Activated naive CD4-positive, alpha-beta T cell treated with anti-CD3 and anti-CD28 coated beads for 36 hours (primary cell): ENCODE measurements at regions of chr1 and their contacts with region 1.

Region 1: DNA sequence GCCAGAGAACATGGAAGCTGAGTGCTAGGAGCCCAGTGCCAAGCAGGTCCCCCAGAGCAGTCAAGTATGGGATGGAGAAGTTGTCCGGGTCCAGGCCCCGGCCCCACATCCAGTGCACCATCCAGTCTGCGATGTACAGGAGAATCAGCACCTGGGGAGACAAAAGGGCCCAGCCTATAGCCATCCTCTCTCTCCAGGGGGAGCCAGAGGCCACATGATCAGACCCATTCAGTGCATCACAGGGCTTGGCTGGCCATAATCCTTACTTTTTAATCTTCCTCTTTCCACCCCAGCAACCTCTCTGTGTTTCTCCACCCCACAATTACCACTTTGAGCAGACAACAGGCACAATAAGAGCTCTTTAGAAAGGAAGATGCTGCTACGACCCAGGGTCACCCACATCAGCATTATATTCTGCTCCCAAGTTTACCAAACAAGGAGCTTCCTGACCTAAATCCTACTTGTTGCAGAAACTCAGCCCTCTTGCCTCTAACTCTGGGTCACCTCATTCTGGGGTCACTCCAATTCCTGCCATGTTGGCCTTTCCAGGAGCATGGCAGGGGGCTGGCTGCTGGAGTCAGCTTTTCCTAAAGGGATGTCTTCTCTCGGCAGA is 16.4 kb upstream of the RAB29 start:
- DNase-seq: peak; percentile 80
- H3K4me3 Mint-ChIP-seq: no peak overlapping the region
- H3K27ac Mint-ChIP-seq: no peak overlapping the region
- H3K4me1 Mint-ChIP-seq: no peaks in the 10 kb centered on the region
- H3K27me3 Mint-ChIP-seq: no peaks in the 10 kb centered on the region

Region 2: DNA sequence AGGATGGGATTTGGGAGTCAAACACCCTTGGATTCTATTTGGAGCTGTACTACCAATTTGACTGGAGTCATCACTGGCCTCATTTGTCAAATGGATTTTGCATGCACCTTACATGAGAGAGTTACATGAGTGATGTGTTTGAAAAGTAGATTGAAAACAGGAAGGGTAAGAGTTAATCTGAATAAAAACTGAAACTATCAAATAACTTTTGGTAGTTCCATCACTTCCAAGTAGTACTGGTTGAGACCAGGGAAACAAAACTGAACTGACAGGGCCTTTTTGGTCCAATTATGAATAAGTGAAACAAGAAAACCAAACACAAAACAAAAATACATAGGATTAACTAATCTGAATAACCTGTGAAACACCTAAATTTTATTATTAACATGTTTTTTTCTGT is 71.9 kb before region 1 on chr1:
- CTCF ChIA-PET with region 1: no interaction called
- intact Hi-C with region 1: no loop called
- DNase-seq: no peak
- H3K4me3 Mint-ChIP-seq: no peak overlapping the region
- H3K27ac Mint-ChIP-seq: peak overlapping the region; percentile 67
- H3K4me1 Mint-ChIP-seq: peaks cover 42% of the 10 kb centered on the region
- H3K27me3 Mint-ChIP-seq: no peaks in the 10 kb centered on the region

Region 3: GRCh38 chr1:205749234-205750137 is 42.2 kb before region 1 on chr1:
- CTCF ChIA-PET with region 1: no interaction called
- intact Hi-C with region 1: no loop called
- DNase-seq: peak; percentile 98
- H3K4me3 Mint-ChIP-seq: peak overlapping the region; percentile 95
- H3K27ac Mint-ChIP-seq: peak overlapping the region; percentile 100
- H3K4me1 Mint-ChIP-seq: peaks cover 37% of the 10 kb centered on the region
- H3K27me3 Mint-ChIP-seq: no peaks in the 10 kb centered on the region

Region 4: GRCh38 chr1:205805082-205805712 is 13.5 kb after region 1 on chr1:
- CTCF ChIA-PET with region 1: interaction called, 15 read pairs
- intact Hi-C with region 1: no loop called
- DNase-seq: peak; percentile 87
- H3K4me3 Mint-ChIP-seq: peak overlapping the region; percentile 58
- H3K27ac Mint-ChIP-seq: peak overlapping the region; percentile 83
- H3K4me1 Mint-ChIP-seq: peaks cover 62% of the 10 kb centered on the region
- H3K27me3 Mint-ChIP-seq: no peaks in the 10 kb centered on the region

Region 5: GRCh38 chr1:205812878-205813754 is 21.4 kb after region 1 on chr1 and contains the start of gene SLC41A1:
- CTCF ChIA-PET with region 1: interaction called, 16 read pairs
- intact Hi-C with region 1: no loop called
- DNase-seq: peak; percentile 95
- H3K4me3 Mint-ChIP-seq: peak within 1 kb of the TSS; percentile 89
- H3K27ac Mint-ChIP-seq: peak within 1 kb of the TSS; percentile 74
- H3K4me1 Mint-ChIP-seq: peaks cover 49% of the 10 kb centered on the region
- H3K27me3 Mint-ChIP-seq: no peaks in the 10 kb centered on the region
- total RNA-seq, gene SLC41A1: 32.1 to 33.9 TPM

Region 6: GRCh38 chr1:205824180-205824579 is 32.5 kb after region 1 on chr1:
- CTCF ChIA-PET with region 1: interaction called, 3 read pairs
- intact Hi-C with region 1: loop called (anchors 1 kb)
- DNase-seq: no peak
- H3K4me3 Mint-ChIP-seq: no peak overlapping the region
- H3K27ac Mint-ChIP-seq: no peak overlapping the region
- H3K4me1 Mint-ChIP-seq: peaks cover 22% of the 10 kb centered on the region
- H3K27me3 Mint-ChIP-seq: no peaks in the 10 kb centered on the region

Region 7: DNA sequence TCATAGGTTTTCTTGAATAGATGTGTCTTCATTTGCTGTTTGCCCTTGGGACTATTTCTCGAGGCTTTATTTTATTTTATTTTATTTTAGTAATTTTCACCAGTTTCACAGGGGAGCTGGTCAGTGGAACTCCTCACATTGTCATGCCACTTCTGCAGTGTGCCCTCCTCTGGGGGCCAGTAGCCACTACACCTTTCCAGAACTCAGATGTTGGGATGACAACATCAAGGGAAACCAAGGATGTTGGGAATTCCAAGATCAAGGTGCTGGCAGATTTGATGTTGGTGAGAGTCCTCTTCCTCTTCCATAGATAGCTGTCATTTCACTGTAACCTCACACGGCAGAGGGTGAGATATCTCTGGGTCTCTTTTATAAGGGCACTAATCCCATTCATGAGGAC is 116.1 kb after region 1 on chr1:
- CTCF ChIA-PET with region 1: interaction called, 12 read pairs
- intact Hi-C with region 1: loop called (anchors 1 kb)
- DNase-seq: peak; percentile 18
- H3K4me3 Mint-ChIP-seq: no peak overlapping the region
- H3K27ac Mint-ChIP-seq: no peak overlapping the region
- H3K4me1 Mint-ChIP-seq: no peaks in the 10 kb centered on the region
- H3K27me3 Mint-ChIP-seq: no peaks in the 10 kb centered on the region

Region 8: GRCh38 chr1:205919026-205919746 is 127.5 kb after region 1 on chr1:
- CTCF ChIA-PET with region 1: interaction called, 18 read pairs
- intact Hi-C with region 1: loop called (anchors 1 kb)
- DNase-seq: peak; percentile 91
- H3K4me3 Mint-ChIP-seq: no peak overlapping the region
- H3K27ac Mint-ChIP-seq: no peak overlapping the region
- H3K4me1 Mint-ChIP-seq: no peaks in the 10 kb centered on the region
- H3K27me3 Mint-ChIP-seq: no peaks in the 10 kb centered on the region

Region 9: GRCh38 chr1:205939690-205940330 is 148.1 kb after region 1 on chr1:
- CTCF ChIA-PET with region 1: no interaction called
- intact Hi-C with region 1: no loop called
- DNase-seq: no peak
- H3K4me3 Mint-ChIP-seq: no peak overlapping the region
- H3K27ac Mint-ChIP-seq: no peak overlapping the region
- H3K4me1 Mint-ChIP-seq: no peaks in the 10 kb centered on the region
- H3K27me3 Mint-ChIP-seq: peaks cover 39% of the 10 kb centered on the region